Activated naive CD4-positive, alpha-beta T cell treated with anti-CD3 and anti-CD28 coated beads for 36 hours (primary cell): ENCODE measurements at regions of chr14 and their contacts with region 1.

Region 1: DNA sequence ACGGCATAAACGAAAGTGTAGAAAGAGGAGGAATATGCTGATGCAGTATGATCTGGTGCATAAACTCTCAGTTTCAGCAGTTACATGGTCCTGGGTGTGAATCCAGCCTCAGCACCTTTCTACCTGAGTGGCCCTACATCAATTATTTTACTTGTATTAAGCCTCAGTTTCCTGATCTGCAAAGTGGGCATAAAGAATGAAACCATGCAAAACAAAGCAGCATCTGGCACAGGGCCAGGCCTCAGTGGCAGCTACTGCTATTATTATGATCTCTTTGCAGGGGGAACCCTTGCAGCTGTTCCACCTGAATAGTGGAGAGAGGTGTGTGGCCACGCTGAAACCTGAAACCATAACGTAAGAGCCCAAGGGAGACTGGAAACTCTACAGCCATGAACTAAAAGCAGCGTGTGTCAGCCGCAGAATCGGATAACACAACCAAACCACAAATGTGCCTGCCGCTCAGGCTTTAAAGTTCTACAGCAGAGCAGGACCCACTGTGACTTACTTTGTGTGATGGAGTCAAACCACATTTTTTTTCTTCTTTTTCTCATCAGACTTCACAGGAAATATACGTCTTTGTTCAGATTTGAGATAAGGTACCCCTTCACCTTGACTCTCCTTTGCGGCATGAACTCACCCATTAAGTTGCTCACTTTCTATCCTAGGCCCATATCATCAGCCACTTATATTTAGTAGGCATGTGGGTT is 29.2 kb upstream of the FOS start:
- DNase-seq: peak; percentile 90
- H3K4me3 Mint-ChIP-seq: no peak overlapping the region
- H3K27ac Mint-ChIP-seq: peak overlapping the region; percentile 66
- H3K4me1 Mint-ChIP-seq: peaks cover 54% of the 10 kb centered on the region
- H3K27me3 Mint-ChIP-seq: no peaks in the 10 kb centered on the region

Region 2: DNA sequence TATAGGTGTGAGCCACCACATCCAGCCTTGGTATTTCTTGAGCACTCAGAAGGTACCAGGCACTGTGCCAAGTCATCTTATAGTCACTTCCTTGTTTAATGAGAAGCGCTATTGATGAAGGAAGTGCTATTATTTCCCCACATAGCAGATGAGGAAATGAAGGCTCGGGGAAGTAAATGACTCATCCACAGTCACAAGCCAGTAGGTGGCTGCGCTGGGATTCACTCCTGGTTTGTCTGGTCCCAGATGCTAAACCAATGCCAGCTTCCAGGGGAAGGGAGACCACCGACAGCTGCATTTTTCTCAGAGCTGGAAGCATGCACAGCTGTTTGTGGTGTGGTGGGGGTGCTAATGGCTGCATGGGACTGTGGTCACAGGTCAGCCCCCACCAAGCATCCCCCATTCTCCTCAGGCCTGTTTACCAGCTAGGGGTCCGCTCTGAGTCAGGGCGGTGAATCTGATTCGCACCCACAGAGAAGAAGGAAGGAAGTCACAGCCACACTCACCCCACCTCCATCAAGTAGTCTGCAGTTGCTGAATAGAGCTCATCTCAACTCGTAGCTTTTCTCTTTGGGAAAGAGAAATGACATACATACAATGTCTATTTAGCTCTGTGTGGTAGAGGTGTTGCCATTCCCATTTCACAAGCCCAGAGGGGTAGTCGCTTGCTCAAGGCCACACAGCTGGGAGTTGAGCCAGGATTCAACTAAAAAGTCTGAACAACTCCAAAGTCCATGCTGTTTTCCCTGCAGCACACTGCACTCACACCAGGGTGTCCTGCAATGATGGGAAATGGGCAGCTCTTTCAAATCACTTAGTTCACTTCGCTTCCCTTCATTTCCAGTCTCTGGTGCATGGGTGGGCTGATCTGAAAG is 631.1 kb before region 1 on chr14:
- CTCF ChIA-PET with region 1: no interaction called
- intact Hi-C with region 1: loop called (anchors 2 kb)
- DNase-seq: peak; percentile 89
- H3K4me3 Mint-ChIP-seq: no peak overlapping the region
- H3K27ac Mint-ChIP-seq: peak overlapping the region; percentile 63
- H3K4me1 Mint-ChIP-seq: peaks cover 62% of the 10 kb centered on the region
- H3K27me3 Mint-ChIP-seq: peaks cover 4% of the 10 kb centered on the region

Region 3: DNA sequence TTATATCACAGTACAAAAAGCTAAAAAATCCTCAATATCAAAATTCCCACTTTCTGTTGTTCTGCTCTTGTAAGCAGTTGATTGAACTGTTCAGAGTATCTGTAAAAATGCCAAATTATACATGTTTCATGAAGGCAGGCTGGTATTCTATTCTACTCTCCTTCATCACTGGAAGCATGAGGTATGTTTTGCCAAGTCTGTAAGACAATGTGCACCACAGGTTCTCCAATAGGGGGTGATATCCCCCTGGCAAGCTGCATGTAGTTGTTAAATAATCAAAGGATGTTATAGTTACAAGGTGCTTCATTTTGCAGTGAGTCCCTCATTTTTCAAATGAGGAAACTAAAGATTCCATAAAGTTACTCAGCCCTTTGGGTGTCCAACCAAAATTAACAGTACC is 107.4 kb before region 1 on chr14:
- CTCF ChIA-PET with region 1: no interaction called
- intact Hi-C with region 1: loop called (anchors 5 kb)
- DNase-seq: peak; percentile 51
- H3K4me3 Mint-ChIP-seq: no peak overlapping the region
- H3K27ac Mint-ChIP-seq: no peak overlapping the region
- H3K4me1 Mint-ChIP-seq: peaks cover 62% of the 10 kb centered on the region
- H3K27me3 Mint-ChIP-seq: no peaks in the 10 kb centered on the region

Region 4: DNA sequence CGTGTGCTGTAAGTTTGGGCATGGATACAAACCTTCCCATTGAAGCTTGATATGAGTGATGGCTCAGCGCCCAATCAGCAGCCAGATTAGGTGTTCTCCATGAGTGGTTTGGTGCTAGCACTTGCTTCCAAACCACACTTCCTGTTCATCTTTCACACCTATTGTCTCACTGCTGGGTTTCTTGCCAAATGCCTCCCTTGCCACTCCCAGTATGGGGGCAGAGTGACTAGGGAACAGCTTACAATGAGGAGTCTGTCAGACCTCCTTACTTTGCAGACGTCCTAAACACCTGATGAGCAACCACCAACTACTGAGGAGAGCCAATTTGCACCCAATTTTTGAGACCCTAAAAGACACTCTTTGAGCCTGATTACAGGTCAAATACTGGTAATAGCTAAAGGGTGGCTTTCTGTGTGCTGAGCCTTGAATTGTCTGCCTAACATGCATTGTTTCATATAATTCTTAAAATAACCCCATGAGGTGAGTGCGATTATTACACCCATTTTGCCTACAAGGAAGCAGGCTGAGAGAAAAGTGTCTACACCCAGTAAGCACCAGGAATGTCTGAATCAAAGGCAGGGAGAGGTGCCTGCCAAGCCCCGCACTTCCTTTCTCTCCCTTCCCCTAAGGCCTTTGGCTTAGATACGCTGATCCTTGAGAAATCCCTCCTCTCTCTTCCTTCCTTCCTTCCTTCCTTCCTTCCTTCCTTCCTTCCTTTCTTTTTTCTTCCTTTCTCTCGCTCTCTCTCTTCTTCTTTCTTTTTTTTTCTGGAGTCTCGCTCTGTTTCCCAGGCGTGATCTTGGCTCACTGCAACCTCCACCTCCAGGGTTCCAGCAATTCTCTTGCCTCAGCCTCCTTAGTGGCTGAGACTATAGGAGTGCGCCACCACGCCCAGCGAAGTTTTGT is 19.0 kb before region 1 on chr14:
- CTCF ChIA-PET with region 1: interaction called, 4 read pairs
- intact Hi-C with region 1: loop called (anchors 1 kb)
- DNase-seq: peak; percentile 81
- H3K4me3 Mint-ChIP-seq: no peak overlapping the region
- H3K27ac Mint-ChIP-seq: no peak overlapping the region
- H3K4me1 Mint-ChIP-seq: peaks cover 46% of the 10 kb centered on the region
- H3K27me3 Mint-ChIP-seq: no peaks in the 10 kb centered on the region

Region 5: DNA sequence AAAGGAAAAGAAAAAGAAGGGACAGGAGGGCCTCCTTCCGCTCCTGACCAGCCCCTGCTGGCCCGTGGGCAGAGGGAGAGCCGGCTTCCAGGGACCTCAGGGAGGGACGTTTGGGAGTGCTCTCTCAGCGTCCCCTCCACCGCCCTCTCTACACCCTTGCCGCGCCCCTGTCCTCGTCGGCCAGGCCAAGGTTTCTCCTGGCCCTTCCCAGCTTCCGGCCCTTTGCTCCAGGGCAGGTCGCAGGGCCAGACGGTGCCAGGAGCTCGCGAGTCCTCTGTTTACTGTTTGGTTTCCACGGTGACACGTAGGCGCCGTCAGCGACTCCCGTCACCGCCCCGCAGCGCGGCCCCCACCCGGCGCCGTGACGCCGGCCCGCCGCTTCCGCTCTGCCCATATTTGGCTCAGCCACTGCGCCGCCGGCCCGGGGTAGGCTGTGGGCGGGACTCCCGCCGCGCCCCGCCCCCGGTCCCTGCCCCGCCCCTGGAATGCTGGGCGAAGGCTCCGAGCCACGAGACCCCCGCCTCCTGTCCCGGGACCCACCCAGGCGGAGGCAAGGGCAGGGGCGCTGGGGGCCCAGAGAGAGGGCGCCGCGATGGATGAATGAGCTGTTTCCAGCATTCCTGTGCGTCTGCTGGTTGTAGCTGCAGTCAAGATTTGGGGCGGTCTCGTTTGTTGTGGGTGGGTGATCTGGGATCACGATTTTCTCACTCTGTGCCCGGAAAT is 44.7 kb after region 1 on chr14:
- CTCF ChIA-PET with region 1: interaction called, 4 read pairs
- intact Hi-C with region 1: loop called (anchors 1 kb)
- DNase-seq: peak; percentile 91
- H3K4me3 Mint-ChIP-seq: peak overlapping the region; percentile 80
- H3K27ac Mint-ChIP-seq: no peak overlapping the region
- H3K4me1 Mint-ChIP-seq: peaks cover 20% of the 10 kb centered on the region
- H3K27me3 Mint-ChIP-seq: peaks cover 3% of the 10 kb centered on the region

Region 6: DNA sequence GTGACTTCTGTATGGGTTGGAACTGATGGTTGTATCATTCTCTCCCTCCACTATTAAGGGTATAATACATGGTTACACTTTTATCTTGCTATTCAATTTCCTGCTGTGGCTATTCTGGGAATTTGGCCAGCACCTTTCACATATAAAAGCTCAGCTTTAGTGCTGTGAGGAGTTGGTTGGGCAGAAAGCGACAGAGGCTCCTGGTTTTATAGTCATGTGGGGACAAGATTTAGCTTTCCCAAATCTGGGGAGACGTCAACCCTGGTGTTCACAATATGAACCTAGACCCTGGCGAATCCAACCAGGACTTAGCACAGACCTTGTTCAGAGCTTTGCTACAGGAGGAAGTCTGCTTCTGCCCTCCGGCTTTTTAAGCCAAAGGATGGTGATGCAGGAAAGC is 65.7 kb after region 1 on chr14:
- CTCF ChIA-PET with region 1: no interaction called
- intact Hi-C with region 1: no loop called
- DNase-seq: no peak
- H3K4me3 Mint-ChIP-seq: no peak overlapping the region
- H3K27ac Mint-ChIP-seq: no peak overlapping the region
- H3K4me1 Mint-ChIP-seq: no peaks in the 10 kb centered on the region
- H3K27me3 Mint-ChIP-seq: no peaks in the 10 kb centered on the region

Region 7: DNA sequence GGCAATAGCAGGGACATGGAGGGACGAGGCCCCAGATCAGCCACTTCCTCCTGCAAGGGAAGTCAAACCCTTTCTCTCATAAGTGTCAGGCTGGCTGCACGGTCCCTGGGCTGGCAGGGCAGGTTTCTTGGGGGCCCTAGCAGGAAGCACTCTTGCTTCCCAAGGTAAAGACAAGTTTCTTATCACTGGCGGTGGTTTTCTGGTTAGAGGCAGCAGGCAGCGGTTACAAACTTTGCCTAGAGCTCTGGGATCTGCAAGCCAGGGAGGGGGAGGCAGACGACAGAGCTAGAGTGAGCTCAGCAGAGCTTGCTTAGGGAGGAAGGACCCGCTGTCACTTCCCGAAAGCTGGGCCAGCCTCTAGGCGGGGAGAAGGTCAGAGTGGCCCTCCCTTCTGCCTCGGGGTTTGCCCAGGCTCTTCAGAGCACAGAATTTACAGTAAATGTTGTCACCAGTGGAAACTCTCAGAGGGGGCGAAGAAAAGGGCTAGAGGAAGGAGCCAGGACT is 293.2 kb after region 1 on chr14:
- CTCF ChIA-PET with region 1: no interaction called
- intact Hi-C with region 1: loop called (anchors 1 kb)
- DNase-seq: peak; percentile 97
- H3K4me3 Mint-ChIP-seq: peak overlapping the region; percentile 65
- H3K27ac Mint-ChIP-seq: peak overlapping the region; percentile 99
- H3K4me1 Mint-ChIP-seq: peaks cover 84% of the 10 kb centered on the region
- H3K27me3 Mint-ChIP-seq: no peaks in the 10 kb centered on the region